ENCODE measurements at regions of chr6 and their contacts with region 1.

Region 1: DNA sequence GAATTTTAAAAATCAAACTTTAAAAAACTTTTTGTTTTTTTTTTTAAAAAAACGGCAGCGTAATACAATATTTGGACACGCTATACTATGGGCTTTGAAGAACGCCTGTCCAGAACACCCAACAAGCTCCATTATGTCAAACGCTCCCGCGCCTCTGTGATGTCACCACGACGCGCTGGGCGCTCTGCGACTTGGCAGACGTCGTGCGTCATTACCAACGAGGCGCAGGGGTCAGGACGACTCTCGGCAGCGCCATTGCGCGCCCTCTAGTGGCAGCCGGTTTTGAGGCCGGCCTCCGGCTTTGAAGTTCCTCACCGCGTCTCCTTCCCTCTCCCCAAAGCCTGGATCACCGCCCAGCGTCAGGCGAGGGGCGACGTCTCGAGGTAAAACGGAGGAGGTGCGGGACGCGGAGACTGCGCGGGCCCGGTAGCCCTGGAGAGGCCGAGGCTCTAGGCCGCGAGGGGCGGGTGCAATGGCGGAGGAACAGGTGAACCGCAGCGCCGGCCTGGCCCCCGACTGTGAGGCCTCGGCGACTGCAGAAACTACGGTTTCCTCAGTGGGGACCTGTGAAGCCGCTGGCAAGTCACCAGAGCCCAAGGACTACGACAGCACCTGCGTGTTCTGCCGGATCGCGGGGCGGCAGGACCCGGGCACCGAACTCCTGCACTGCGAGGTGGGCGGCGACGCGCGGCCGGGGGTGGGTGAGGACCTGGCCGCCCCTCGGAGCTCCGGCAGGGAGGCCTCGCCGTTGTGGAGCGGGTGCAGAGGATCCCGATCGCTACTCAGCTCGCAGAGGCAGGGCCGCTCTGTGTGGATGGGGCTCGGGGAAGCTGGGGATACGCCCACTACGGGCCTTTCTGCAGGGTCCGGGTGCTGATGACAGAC is at the start of gene HINT3:
- DNase-seq: peak; percentile 97 to 99 (median 98)
- ATAC-seq: peak; percentile 96 to 98 (median 97)
- H3K4me3 ChIP-seq: peak within 1 kb of the TSS; percentile 71 to 94 (median 85)
- H3K27ac ChIP-seq: peak within 1 kb of the TSS; percentile 67 to 97 (median 91)
- H3K4me1 ChIP-seq: peaks cover 0 to 32% (median 22%) of the 10 kb centered on the region in 12 donors
- H3K27me3 ChIP-seq: no peaks in the 10 kb centered on the region
- CTCF ChIP-seq: peak; percentile 93 to 100 (median 99)
- POLR2A ChIP-seq: peak in 1 of 2 donors; percentile 49
- total RNA-seq, gene HINT3: 26.3 to 40.0 (median 33.8) TPM

Region 2: DNA sequence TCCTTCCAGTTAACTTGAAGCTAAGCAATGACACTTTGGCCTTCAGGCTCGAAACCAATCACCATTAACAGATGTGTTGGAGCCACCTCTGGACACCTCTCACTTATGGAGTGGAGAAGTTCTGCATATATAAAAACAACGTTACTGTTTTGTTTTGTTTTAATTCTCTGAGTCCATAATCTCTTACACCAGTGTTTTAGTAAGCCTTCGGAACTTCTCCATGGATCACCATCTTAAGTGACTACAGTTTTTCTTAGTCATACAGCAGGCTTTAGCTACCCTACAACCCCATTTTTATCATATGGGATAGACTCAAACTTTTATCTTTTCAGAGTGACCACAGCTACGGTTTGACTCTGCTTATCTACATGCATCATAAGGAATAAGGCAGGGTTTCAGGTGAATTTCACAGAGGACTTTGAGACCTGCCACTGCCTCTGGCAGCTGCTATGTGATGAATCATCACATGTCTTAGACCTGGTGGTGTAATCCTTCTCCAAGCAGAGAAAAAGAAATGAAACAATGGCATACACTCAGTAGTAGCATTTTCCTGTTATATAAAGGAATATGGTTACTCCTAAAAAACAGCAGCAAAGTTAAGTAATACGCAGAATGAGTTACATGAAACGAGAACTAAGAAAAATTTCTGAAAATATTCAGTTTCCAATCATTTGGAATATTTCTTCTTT is 649.5 kb before region 1 on chr6:
- intact Hi-C with region 1: loop called in 8 of 10 experiments (anchors 5 to 10 kb)
- DNase-seq: no peak
- ATAC-seq: no peak
- H3K4me3 ChIP-seq: no peak overlapping the region
- H3K27ac ChIP-seq: no peak overlapping the region
- H3K4me1 ChIP-seq: peaks cover 0 to 6% (median 0%) of the 10 kb centered on the region in 12 donors
- H3K27me3 ChIP-seq: peaks cover 0 to 3% (median 0%) of the 10 kb centered on the region in 9 donors
- CTCF ChIP-seq: no peak
- POLR2A ChIP-seq: no peak

Region 3: GRCh38 chr6:125779924-125780539 is 176.7 kb before region 1 on chr6:
- intact Hi-C with region 1: loop called in 7 of 10 experiments (anchors 2 to 5 kb)
- DNase-seq: peak; percentile 67 to 88 (median 80)
- ATAC-seq: peak; percentile 95 to 98 (median 97)
- H3K4me3 ChIP-seq: peak overlapping the region; percentile 28 to 76 (median 64)
- H3K27ac ChIP-seq: peak overlapping the region; percentile 73 to 98 (median 90)
- H3K4me1 ChIP-seq: peaks cover 0 to 12% (median 7%) of the 10 kb centered on the region in 12 donors
- H3K27me3 ChIP-seq: no peaks in the 10 kb centered on the region
- CTCF ChIP-seq: peak in 11 of 12 donors; percentile 19 to 56 (median 39)
- POLR2A ChIP-seq: no peak

Region 4: DNA sequence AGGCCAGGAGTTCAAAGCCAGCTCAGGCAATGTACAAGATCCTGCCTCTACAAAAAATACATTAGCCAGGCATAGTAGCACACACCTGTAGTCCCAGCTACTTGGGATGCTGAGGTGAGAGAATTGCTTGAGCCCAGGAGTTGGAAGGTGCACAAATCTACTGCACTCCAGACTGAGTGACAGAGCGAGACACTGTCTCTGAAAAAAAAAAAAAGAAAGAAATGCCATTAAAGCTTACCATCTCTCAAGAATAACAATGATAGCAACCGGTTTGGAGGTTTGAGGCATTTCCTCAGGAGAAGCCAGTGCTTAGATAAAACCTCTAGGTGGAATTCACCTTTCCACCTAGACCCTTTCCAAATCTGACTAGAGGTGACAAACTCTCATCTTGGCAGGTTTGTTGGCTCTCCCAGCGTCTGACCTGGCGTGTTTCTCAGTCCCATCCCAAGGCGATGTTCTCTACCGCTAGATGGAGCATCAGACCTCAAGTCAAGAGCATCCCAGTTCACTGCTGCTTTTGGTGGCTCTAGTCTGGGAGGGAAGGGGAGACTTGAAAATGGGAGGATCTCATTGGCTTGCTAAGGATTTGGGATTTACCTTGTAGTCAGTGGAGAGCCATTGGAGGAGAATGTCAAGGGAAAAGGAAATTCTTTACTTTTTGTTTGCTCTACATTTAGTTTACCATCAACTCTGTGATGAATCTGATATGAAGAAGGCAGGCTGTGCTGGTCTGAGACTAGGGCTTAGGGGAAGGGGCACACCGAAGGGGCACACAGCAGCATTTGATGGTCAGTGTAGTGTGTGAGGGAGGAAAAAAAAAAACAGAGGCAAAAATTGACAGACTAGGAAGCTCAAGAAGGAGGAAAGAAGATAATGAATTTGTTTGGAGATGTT is 98.1 kb before region 1 on chr6:
- intact Hi-C with region 1: loop called in 6 of 10 experiments (anchors 5 to 10 kb)
- DNase-seq: peak in 4 of 5 donors; percentile 29 to 53 (median 38)
- ATAC-seq: peak; percentile 69 to 90 (median 86)
- H3K4me3 ChIP-seq: no peak overlapping the region
- H3K27ac ChIP-seq: no peak overlapping the region
- H3K4me1 ChIP-seq: peaks cover 0 to 10% (median 1%) of the 10 kb centered on the region in 12 donors
- H3K27me3 ChIP-seq: no peaks in the 10 kb centered on the region
- CTCF ChIP-seq: peak; percentile 44 to 81 (median 60)
- POLR2A ChIP-seq: no peak

Region 5: GRCh38 chr6:125906158-125906998 is 50.4 kb before region 1 on chr6:
- intact Hi-C with region 1: loop called in 1 of 10 experiments (anchors 5 kb)
- DNase-seq: peak in 3 of 5 donors; percentile 23 to 33 (median 27)
- ATAC-seq: peak in 2 of 4 donors; percentile 42 to 50
- H3K4me3 ChIP-seq: no peak overlapping the region
- H3K27ac ChIP-seq: no peak overlapping the region
- H3K4me1 ChIP-seq: peaks cover 0 to 15% (median 0%) of the 10 kb centered on the region in 12 donors
- H3K27me3 ChIP-seq: no peaks in the 10 kb centered on the region
- CTCF ChIP-seq: peak; percentile 37 to 80 (median 54)
- POLR2A ChIP-seq: no peak

Region 6: DNA sequence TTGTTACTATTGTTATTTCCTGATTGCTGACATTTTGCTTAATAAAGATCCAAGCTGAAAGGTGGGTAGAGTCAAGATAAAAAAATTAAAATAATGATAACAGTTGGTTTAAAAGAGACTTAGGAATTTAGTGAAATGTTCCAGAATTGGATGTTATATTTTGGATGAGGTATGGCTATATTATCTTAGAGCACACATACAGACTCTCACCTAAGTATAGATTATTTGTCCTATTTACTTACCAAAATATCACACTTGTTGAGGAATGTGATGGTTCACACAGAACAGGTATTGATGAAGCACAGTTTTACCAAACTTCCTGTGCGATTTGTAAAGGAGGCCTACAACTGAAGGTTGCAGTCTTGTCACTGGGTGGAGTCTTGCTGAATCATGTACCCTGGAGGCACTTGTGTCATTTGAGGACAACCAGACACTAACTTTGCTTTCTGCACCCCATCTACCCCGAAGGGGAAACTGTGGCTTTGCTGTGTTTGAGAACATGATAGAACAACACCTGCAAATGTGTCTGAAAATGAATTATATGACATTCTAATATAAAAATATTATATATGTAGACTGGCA is 32.7 kb before region 1 on chr6:
- intact Hi-C with region 1: loop called in 3 of 10 experiments (anchors 5 kb)
- DNase-seq: no peak
- ATAC-seq: no peak
- H3K4me3 ChIP-seq: no peak overlapping the region
- H3K27ac ChIP-seq: peak overlapping the region in 1 of 12 donors; percentile 40
- H3K4me1 ChIP-seq: peaks cover 0 to 73% (median 7%) of the 10 kb centered on the region in 12 donors
- H3K27me3 ChIP-seq: no peaks in the 10 kb centered on the region
- CTCF ChIP-seq: no peak
- POLR2A ChIP-seq: no peak

Region 7: GRCh38 chr6:126188271-126188909 is 231.6 kb after region 1 on chr6:
- intact Hi-C with region 1: no loop called
- DNase-seq: no peak
- ATAC-seq: no peak
- H3K4me3 ChIP-seq: no peak overlapping the region
- H3K27ac ChIP-seq: no peak overlapping the region
- H3K4me1 ChIP-seq: no peaks in the 10 kb centered on the region
- H3K27me3 ChIP-seq: no peaks in the 10 kb centered on the region
- CTCF ChIP-seq: no peak
- POLR2A ChIP-seq: no peak

Region 8: DNA sequence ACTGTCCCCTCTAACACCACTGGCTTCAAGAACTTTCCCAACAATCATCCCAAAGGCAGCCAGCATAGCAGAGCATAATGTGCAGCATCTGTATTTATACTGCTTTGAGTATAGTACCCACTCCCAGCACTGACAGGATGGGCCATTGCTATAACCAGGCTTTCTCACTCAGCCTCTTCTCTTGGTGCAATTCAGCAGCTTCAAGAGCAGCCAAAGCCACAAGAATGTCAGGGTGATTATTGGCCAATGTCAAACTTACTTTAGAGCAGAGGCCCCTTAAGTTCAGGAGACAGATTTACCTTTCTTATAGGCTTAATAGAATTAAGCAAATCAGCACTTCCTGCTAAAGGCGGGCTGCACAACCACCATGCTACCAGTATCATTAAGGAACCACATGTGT is 929.4 kb after region 1 on chr6:
- intact Hi-C with region 1: no loop called
- DNase-seq: no peak
- ATAC-seq: no peak
- H3K4me3 ChIP-seq: no peak overlapping the region
- H3K27ac ChIP-seq: no peak overlapping the region
- H3K4me1 ChIP-seq: no peaks in the 10 kb centered on the region
- H3K27me3 ChIP-seq: no peaks in the 10 kb centered on the region
- CTCF ChIP-seq: no peak
- POLR2A ChIP-seq: no peak